Ascending aorta (tissue), 2 donors: ENCODE measurements at regions of chr2 and their contacts with region 1.

Region 1: GRCh38 chr2:134118279-134119116 is 135.4 kb upstream of the MGAT5 start:
- DNase-seq: peak; percentile 77 to 96
- H3K4me3 ChIP-seq: peak overlapping the region in 1 of 2 donors; percentile 98
- H3K27ac ChIP-seq: peak overlapping the region; percentile 95 to 98
- H3K4me1 ChIP-seq: peaks cover 7 to 19% of the 10 kb centered on the region in 2 donors
- H3K27me3 ChIP-seq: no peaks in the 10 kb centered on the region
- CTCF ChIP-seq: peak; percentile 69 to 85 (median 77)

Region 2: GRCh38 chr2:132253496-132254305 is 1864.8 kb before region 1 on chr2:
- intact Hi-C with region 1: no loop called
- DNase-seq: no peak
- H3K4me3 ChIP-seq: no peak overlapping the region
- H3K27ac ChIP-seq: no peak overlapping the region
- H3K4me1 ChIP-seq: no peaks in the 10 kb centered on the region
- H3K27me3 ChIP-seq: no peaks in the 10 kb centered on the region
- CTCF ChIP-seq: no peak

Region 3: GRCh38 chr2:134021830-134022524 is 96.5 kb before region 1 on chr2:
- intact Hi-C with region 1: no loop called
- DNase-seq: no peak
- H3K4me3 ChIP-seq: no peak overlapping the region
- H3K27ac ChIP-seq: no peak overlapping the region
- H3K4me1 ChIP-seq: no peaks in the 10 kb centered on the region
- H3K27me3 ChIP-seq: no peaks in the 10 kb centered on the region
- CTCF ChIP-seq: no peak

Region 4: DNA sequence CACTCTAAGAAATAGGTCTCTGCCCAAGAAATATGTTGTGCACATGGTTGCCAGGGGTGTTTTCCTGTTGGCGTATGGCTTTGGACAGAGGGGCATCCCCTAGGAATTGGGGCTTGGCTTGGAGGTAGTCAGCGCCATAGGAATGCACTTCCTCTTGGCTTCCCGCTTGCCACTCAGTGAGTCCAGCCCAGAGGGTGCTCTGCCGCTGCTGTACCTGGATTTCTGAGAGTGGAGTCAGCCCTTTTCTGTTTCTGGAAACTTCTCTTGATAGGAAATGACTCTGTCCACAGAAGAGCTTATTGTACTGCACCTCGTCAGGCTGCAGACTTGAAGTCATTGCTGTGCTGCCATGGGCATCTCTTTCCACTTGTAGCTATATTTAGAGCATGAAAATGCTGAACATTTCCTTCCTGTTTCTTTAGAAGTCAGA is 18.7 kb after region 1 on chr2:
- intact Hi-C with region 1: loop called (anchors 1 kb)
- DNase-seq: peak in 1 of 2 donors; percentile 76
- H3K4me3 ChIP-seq: peak overlapping the region; percentile 36 to 55
- H3K27ac ChIP-seq: peak overlapping the region; percentile 44 to 70
- H3K4me1 ChIP-seq: peaks cover 11 to 15% of the 10 kb centered on the region in 2 donors
- H3K27me3 ChIP-seq: no peaks in the 10 kb centered on the region
- CTCF ChIP-seq: no peak

Region 5: DNA sequence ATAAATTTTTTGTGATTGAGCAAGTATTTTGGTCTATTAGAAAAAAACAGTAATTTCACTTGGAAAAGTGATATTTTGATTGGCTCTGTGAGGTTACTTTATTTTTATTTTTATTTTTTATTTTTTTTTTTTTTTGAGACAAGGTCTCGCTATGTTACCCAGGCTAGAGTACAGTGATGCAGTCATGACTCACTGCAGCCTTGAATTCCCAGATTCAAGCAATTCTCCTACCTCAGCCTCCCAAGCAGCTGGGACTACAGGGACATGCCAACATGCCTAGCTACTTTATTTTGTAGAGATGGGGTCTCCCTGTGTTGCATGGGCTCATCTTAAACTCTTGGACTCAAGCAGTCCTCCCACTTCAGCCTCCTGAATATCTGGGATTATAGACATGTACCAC is 74.5 kb after region 1 on chr2:
- intact Hi-C with region 1: loop called (anchors 2 kb)
- DNase-seq: no peak
- H3K4me3 ChIP-seq: no peak overlapping the region
- H3K27ac ChIP-seq: no peak overlapping the region
- H3K4me1 ChIP-seq: peaks cover 0 to 16% of the 10 kb centered on the region in 2 donors
- H3K27me3 ChIP-seq: no peaks in the 10 kb centered on the region
- CTCF ChIP-seq: no peak

Region 6: GRCh38 chr2:134207564-134208209 is 89.2 kb after region 1 on chr2:
- intact Hi-C with region 1: loop called (anchors 5 kb)
- DNase-seq: peak in 1 of 2 donors; percentile 68
- H3K4me3 ChIP-seq: no peak overlapping the region
- H3K27ac ChIP-seq: no peak overlapping the region
- H3K4me1 ChIP-seq: peaks cover 0 to 17% of the 10 kb centered on the region in 2 donors
- H3K27me3 ChIP-seq: no peaks in the 10 kb centered on the region
- CTCF ChIP-seq: peak; percentile 43 to 68 (median 63)

Region 7: GRCh38 chr2:134245340-134245984 is 127.0 kb after region 1 on chr2:
- intact Hi-C with region 1: loop called (anchors 1 kb)
- DNase-seq: peak in 1 of 2 donors; percentile 89
- H3K4me3 ChIP-seq: no peak overlapping the region
- H3K27ac ChIP-seq: no peak overlapping the region
- H3K4me1 ChIP-seq: peaks cover 0 to 3% of the 10 kb centered on the region in 2 donors
- H3K27me3 ChIP-seq: no peaks in the 10 kb centered on the region
- CTCF ChIP-seq: peak; percentile 36 to 67 (median 65)

Region 8: DNA sequence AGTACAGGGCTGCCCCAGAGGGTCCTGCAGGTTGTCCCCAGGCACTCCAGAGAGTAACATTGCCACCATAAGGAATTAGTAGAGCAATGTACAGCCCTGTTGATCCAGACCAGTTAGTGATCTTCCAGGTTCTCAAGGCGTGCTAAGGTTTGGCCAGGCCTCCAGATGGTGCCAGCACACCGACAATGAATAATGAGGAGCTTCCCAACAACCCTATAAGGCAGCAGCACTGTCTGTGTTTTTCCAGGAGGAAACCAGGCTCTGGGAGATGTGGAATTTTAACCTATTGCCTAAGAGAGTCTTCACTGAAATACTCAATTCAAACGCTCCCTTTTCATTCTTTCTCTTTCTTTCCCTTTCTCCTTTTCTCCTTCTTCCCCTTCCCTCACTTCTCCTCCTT is 257.4 kb after region 1 on chr2:
- intact Hi-C with region 1: loop called (anchors 5 kb)
- DNase-seq: peak in 1 of 2 donors; percentile 73
- H3K4me3 ChIP-seq: no peak overlapping the region
- H3K27ac ChIP-seq: peak overlapping the region in 1 of 2 donors; percentile 27
- H3K4me1 ChIP-seq: peaks cover 0 to 5% of the 10 kb centered on the region in 2 donors
- H3K27me3 ChIP-seq: no peaks in the 10 kb centered on the region
- CTCF ChIP-seq: peak; percentile 36 to 62 (median 44)

Region 9: GRCh38 chr2:134411828-134412638 is 293.5 kb after region 1 on chr2:
- intact Hi-C with region 1: loop called (anchors 1 kb)
- DNase-seq: peak in 1 of 2 donors; percentile 84
- H3K4me3 ChIP-seq: no peak overlapping the region
- H3K27ac ChIP-seq: no peak overlapping the region
- H3K4me1 ChIP-seq: peaks cover 3 to 6% of the 10 kb centered on the region in 2 donors
- H3K27me3 ChIP-seq: no peaks in the 10 kb centered on the region
- CTCF ChIP-seq: peak; percentile 63 to 82 (median 71)